Activated CD4-positive, alpha-beta T cell treated with anti-CD3 and anti-CD28 coated beads for 36 hours (primary cell): ENCODE measurements at regions of chr6 and their contacts with region 1.

Region 1: GRCh38 chr6:1436334-1437306 is 47.2 kb downstream of the FOXF2 start:
- DNase-seq: peak; percentile 61
- ATAC-seq: peak; percentile 78
- H3K4me3 Mint-ChIP-seq: no peak overlapping the region
- H3K27ac Mint-ChIP-seq: no peak overlapping the region
- H3K4me1 Mint-ChIP-seq: peaks cover 4% of the 10 kb centered on the region
- H3K27me3 Mint-ChIP-seq: peaks cover 34% of the 10 kb centered on the region

Region 2: GRCh38 chr6:1396952-1397868 is 39.4 kb before region 1 on chr6:
- CTCF ChIA-PET with region 1: no interaction called
- POLR2A ChIA-PET with region 1: no interaction called
- intact Hi-C with region 1: loop called in 1 of 2 experiments (anchors 2 kb)
- DNase-seq: peak; percentile 85
- ATAC-seq: peak; percentile 75
- H3K4me3 Mint-ChIP-seq: no peak overlapping the region
- H3K27ac Mint-ChIP-seq: no peak overlapping the region
- H3K4me1 Mint-ChIP-seq: peaks cover 4% of the 10 kb centered on the region
- H3K27me3 Mint-ChIP-seq: peaks cover 51% of the 10 kb centered on the region

Region 3: GRCh38 chr6:1426416-1426815 is 10.2 kb before region 1 on chr6:
- CTCF ChIA-PET with region 1: interaction called, 11 read pairs
- POLR2A ChIA-PET with region 1: no interaction called
- intact Hi-C with region 1: no loop called
- DNase-seq: no peak
- ATAC-seq: no peak
- H3K4me3 Mint-ChIP-seq: no peak overlapping the region
- H3K27ac Mint-ChIP-seq: no peak overlapping the region
- H3K4me1 Mint-ChIP-seq: no peaks in the 10 kb centered on the region
- H3K27me3 Mint-ChIP-seq: peaks cover 25% of the 10 kb centered on the region